K562 (cell line): ENCODE measurements at regions of chr1 and their contacts with region 1.

Region 1: DNA sequence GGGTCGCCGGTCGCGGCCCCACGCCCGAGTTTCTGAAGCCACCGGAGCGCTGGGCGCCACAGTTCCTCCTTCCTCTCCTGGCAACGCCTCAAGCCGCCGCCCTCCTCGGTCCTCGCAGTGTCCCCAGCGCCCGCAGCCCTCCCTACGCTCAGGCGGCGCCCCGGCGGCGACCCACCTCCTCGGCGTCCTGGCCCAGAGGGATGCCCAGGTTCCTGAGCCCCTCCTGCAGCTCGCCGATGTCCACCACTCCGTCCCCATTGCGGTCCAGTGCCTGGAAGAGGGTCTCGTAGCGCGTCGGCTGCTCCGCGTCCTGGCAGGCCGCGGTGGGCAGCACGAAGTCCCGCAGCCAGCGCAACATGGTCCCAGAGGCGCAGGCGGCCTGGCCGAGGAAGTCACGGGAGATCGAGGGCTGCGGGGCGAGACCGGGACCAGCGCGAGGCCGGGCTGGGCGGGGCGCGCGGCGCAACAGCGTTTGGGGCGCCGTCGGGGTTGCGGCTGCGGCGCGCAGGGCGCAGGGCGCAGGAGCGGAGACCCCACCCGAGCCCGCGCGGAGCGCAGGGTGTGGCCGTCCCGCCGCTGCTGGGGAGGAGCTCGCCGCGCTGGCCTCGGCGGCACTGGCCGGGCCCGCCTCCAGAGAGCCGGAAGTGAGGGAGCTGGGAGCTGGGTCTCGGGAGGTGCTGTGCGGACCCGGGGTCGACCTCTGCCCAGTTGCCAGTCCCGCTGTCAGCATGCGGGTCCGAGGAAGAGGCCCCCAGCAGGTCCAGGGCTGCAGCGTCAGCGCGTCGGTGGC is at the start of gene SLC25A24:
- DNase-seq: peak; percentile 92 to 94 (median 92)
- ATAC-seq: peak; percentile 98
- H3K4me3 ChIP-seq: peak within 1 kb of the TSS; percentile 79
- H3K27ac ChIP-seq: peak within 1 kb of the TSS; percentile 72
- H3K4me1 ChIP-seq: peaks cover 11 to 12% of the 10 kb centered on the region in 2 experiments; a peak in 4 of 5 replicates
- H3K27me3 ChIP-seq: no peaks in the 10 kb centered on the region
- CTCF ChIP-seq: no peak
- EP300 ChIP-seq: no peak
- POLR2A ChIP-seq: peak; percentile 77
- RAD21 ChIP-seq: no peak
- polyA plus RNA-seq, gene SLC25A24: 6.9 to 8.3 TPM

Region 2: DNA sequence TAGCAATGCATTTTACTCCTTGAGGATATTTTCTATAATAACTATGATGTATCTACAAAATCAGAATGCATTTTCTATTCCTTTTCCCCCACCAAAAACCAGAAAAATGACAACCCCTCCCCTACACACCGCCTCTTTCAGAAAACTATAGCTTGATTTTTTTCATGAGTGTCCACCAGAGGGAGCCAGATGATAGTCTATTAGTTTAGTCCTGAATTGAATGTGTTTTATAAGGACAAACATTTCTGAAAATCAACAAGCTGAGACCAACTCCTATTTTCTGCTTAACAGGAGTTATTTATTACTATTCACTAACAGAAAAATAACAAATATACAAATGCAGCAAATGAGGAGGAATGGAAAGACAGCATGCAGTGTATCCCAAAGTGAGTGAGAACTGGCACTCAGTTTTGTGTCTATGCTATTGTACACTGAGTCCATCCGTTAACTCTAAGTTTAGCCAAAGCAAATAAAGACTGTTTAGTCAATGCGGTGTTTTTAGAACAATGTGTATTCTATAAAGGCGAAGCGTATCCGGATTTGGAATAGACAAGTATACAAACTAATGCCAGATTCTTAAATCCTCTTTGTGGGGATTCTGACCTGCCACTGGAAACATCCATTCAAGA is 417.6 kb before region 1 on chr1:
- CTCF ChIA-PET with region 1: no interaction called
- POLR2A ChIA-PET with region 1: interaction called, 3 read pairs
- in situ Hi-C with region 1: no loop called
- intact Hi-C with region 1: loop called (anchors 5 kb)
- DNase-seq: peak; percentile 35 to 75 (median 57)
- ATAC-seq: peak; percentile 89
- H3K4me3 ChIP-seq: no peak overlapping the region
- H3K27ac ChIP-seq: no peak overlapping the region
- H3K4me1 ChIP-seq: no peaks in the 10 kb centered on the region
- H3K27me3 ChIP-seq: no peaks in the 10 kb centered on the region
- CTCF ChIP-seq: peak; percentile 58 to 84 (median 60); a peak in 5 of 6 replicates
- EP300 ChIP-seq: no peak
- POLR2A ChIP-seq: no peak
- RAD21 ChIP-seq: peak; percentile 92 to 95

Region 3: DNA sequence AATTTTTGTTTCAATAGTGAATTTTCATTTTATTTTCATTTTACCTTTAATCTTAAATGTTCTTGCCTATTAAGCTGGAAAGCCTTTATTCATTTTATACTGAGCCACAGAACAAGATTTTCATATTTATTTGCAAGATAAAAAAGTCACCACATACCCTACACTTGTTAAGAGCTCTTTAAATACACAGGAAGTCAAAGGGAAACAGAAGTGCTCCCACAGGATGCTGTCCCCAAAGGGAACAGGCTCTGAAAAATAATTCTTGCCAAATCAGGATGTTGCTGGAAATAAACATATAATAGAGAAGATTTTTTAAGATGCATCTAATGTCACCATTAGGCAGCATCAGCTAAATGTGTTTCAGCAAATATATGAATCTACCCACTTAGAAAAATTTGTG is 348.6 kb before region 1 on chr1:
- CTCF ChIA-PET with region 1: no interaction called
- POLR2A ChIA-PET with region 1: no interaction called
- in situ Hi-C with region 1: no loop called
- intact Hi-C with region 1: no loop called
- DNase-seq: no peak
- ATAC-seq: no peak
- H3K4me3 ChIP-seq: no peak overlapping the region
- H3K27ac ChIP-seq: no peak overlapping the region
- H3K4me1 ChIP-seq: no peaks in the 10 kb centered on the region
- H3K27me3 ChIP-seq: no peaks in the 10 kb centered on the region
- CTCF ChIP-seq: no peak
- EP300 ChIP-seq: no peak
- POLR2A ChIP-seq: no peak
- RAD21 ChIP-seq: no peak

Region 4: DNA sequence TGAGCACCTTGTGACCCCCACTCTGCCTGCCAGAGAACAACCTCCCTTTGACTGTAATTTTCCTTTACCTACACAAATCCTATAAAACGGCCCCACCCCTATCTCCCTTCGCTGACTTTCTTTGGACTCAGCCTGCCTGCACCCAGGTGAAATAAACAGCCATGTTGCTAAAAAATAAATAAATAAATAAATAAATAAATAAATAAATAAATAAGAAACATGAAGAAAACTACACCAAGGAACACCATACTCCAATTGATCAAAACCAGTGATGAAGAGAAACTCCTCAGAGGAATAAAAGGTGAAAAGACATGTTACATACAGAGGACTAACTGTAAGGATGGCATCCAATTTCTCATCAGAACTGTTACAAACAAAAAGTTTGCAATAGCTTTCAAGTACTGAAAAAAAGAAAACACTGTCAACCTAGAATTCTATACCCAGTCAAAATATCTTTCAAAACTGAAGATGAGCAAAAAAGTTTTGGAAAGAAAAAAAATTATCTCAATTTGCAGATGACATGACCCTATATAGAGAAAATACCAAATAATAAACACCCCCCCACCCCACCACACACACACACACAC is 278.5 kb after region 1 on chr1:
- CTCF ChIA-PET with region 1: no interaction called
- POLR2A ChIA-PET with region 1: no interaction called
- in situ Hi-C with region 1: loop called (anchors 25 kb)
- intact Hi-C with region 1: no loop called
- DNase-seq: no peak
- ATAC-seq: no peak
- H3K4me3 ChIP-seq: no peak overlapping the region
- H3K27ac ChIP-seq: no peak overlapping the region
- H3K4me1 ChIP-seq: no peaks in the 10 kb centered on the region; a peak in 1 of 5 replicates
- H3K27me3 ChIP-seq: no peaks in the 10 kb centered on the region
- CTCF ChIP-seq: no peak
- EP300 ChIP-seq: no peak
- POLR2A ChIP-seq: no peak
- RAD21 ChIP-seq: no peak

Region 5: GRCh38 chr1:108852221-108852975 is 652.4 kb after region 1 on chr1:
- CTCF ChIA-PET with region 1: no interaction called
- POLR2A ChIA-PET with region 1: no interaction called
- in situ Hi-C with region 1: no loop called
- intact Hi-C with region 1: no loop called
- DNase-seq: no peak
- ATAC-seq: no peak
- H3K4me3 ChIP-seq: no peak overlapping the region
- H3K27ac ChIP-seq: no peak overlapping the region
- H3K4me1 ChIP-seq: no peaks in the 10 kb centered on the region
- H3K27me3 ChIP-seq: peaks cover 11 to 16% of the 10 kb centered on the region in 2 experiments; a peak in 3 of 5 replicates
- CTCF ChIP-seq: no peak
- EP300 ChIP-seq: no peak
- POLR2A ChIP-seq: no peak
- RAD21 ChIP-seq: no peak